Mammary epithelial cell (primary cell): ENCODE measurements at regions of chr16 and their contacts with region 1.

Region 1: DNA sequence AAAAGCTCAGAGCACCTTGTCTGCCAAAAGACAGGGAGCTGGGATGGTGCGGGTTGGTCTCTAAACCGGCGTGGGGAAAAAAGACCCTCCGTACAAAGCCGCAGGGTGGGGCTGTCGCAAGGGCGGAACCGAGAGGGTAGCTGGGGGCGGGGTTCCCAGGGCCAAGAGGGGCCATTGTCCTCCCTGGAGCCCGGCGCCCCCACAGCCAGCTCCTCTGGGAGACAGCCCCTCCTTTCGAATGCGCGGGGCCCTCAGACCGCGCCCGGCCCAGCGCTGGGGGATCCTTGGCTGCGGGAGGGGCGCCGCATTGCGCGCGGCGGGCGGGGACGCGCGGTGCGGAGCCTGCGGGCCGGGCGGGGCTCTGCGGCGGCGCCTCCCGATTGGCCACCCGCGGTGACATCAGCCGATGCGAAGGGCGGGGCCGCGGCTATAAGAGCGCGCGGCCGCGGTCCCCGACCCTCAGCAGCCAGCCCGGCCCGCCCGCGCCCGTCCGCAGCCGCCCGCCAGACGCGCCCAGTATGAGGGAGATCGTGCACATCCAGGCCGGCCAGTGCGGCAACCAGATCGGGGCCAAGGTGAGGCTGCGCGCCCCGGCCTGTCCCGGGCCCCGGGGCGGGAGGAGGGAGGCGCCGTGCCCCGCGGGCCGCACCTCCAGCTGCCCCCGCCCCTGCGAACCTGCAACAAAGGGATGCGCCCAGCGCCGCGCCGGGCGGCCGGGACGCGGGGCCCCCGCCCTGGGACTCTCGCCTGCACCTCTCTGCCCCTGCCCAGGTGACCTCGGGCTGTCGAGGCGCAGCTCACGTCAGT is at the start of gene TUBB3:
- DNase-seq: peak; percentile 72
- H3K4me3 ChIP-seq: peak within 1 kb of the TSS; percentile 59 to 73 (median 69)
- H3K27ac ChIP-seq: peak within 1 kb of the TSS; percentile 67
- H3K4me1 ChIP-seq: peaks cover 57% of the 10 kb centered on the region
- H3K27me3 ChIP-seq: no peaks in the 10 kb centered on the region
- CTCF ChIP-seq: no peak
- total RNA-seq, gene TUBB3: 99.5 to 103 TPM

Region 2: GRCh38 chr16:89325861-89326471 is 597.1 kb before region 1 on chr16:
- CTCF ChIA-PET with region 1: no interaction called
- dilution Hi-C with region 1: no loop called
- in situ Hi-C with region 1: no loop called
- intact Hi-C with region 1: no loop called
- DNase-seq: peak; percentile 56
- H3K4me3 ChIP-seq: no peak overlapping the region
- H3K27ac ChIP-seq: peak overlapping the region; percentile 53
- H3K4me1 ChIP-seq: peaks cover 67% of the 10 kb centered on the region
- H3K27me3 ChIP-seq: no peaks in the 10 kb centered on the region
- CTCF ChIP-seq: no peak

Region 3: DNA sequence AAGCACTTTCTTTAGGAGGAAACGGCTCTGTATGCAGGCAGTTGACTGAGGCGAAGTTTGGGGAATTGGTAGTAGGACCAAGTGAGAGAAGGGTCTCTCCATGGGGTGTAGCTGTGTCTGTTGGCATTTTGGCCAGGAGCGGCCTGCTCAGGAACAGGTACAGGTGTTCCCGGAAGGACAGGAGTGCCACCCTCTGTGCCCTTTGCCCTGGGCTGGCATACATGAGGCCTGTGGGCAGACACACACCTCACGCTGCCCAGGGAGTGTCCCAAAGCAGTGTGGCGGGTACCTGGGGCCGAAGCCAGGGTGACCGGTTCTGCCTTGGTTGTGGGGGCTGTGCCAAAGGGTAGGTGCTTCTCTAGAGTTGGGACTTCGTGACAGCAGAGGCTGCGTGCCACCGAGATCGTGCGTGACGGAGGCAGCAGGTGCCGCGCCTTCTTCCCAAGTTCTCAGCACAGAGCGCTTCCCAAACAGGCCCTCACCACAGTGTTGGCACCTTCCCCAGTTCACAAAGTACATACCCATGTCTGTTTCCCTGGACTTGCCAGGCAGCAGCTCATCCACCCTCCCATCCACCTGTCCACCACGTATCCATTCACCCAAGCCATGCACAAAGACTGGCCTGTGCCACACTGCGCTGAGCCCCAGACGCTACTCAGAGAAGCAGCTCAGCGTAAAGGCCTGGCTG is 69.6 kb before region 1 on chr16:
- CTCF ChIA-PET with region 1: no interaction called
- dilution Hi-C with region 1: loop called (anchors 5 kb)
- in situ Hi-C with region 1: no loop called
- intact Hi-C with region 1: no loop called
- DNase-seq: no peak
- H3K4me3 ChIP-seq: no peak overlapping the region
- H3K27ac ChIP-seq: no peak overlapping the region
- H3K4me1 ChIP-seq: no peaks in the 10 kb centered on the region
- H3K27me3 ChIP-seq: no peaks in the 10 kb centered on the region
- CTCF ChIP-seq: no peak

Region 4: DNA sequence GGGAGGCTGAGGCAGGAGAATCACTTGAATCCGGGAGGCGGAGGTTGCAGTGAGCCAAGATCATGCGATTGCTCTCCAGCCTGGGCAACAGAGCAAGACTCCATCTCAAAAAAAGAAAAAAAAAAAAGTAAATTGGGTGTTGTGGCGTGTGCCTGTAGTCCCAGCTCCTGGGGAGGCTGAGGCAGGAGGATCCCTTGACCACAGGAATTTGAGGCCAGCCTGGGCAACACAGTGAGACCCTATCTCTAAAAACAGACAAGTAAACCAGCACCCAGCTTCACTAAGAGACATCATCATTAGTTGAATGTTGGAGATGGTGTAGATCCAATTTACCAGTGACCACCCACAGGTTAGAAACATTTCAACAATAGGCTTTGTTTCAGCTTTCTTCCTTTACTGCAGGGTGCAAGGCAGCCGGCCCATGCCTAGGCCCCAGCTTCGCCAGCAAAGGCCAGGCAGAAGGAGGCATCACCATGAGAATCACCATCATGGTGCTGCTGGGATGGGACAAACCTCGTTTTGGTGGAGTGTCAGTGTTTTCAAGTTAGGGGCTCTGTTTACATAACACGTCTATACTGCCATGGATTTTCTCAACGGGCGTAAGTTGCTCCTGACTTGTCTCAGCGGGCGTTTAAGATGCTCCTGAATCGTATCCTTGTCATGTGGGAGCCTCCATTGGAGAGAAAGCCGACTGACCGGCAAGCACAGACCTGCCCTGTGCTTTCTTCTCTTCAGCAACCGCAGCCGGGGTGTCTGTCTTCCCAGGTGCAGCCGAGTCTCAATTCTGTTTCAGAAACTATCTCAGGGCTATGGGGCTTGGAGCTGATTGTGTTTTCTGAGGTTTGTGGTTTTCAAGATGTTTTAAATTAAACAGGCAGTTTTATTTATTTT is 42.4 kb before region 1 on chr16:
- CTCF ChIA-PET with region 1: no interaction called
- dilution Hi-C with region 1: no loop called
- in situ Hi-C with region 1: no loop called
- intact Hi-C with region 1: loop called (anchors 2 kb)
- DNase-seq: peak; percentile 93
- H3K4me3 ChIP-seq: no peak overlapping the region
- H3K27ac ChIP-seq: peak overlapping the region; percentile 56
- H3K4me1 ChIP-seq: peaks cover 16% of the 10 kb centered on the region
- H3K27me3 ChIP-seq: no peaks in the 10 kb centered on the region
- CTCF ChIP-seq: no peak

Region 5: DNA sequence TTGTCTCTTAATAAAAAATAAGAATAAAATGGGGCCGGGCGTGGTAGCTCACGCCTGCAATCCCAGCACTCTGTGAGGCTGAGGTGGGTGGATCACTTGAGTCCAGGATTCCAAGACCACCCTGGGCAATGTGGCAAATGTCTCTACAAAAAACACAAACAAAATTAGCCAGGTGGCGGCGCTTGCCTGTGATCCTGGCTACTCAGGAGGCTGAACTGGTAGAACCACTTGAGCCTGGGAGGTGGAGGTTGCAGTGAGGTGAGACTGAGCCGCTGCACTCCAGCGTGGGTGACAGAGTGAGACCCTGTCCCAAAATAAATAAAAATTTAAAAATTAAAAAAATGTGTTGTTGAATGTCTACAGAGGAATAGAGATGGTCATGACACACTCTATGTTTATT is 22.6 kb after region 1 on chr16:
- CTCF ChIA-PET with region 1: no interaction called
- dilution Hi-C with region 1: no loop called
- in situ Hi-C with region 1: no loop called
- intact Hi-C with region 1: loop called (anchors 1 kb)
- DNase-seq: no peak
- H3K4me3 ChIP-seq: no peak overlapping the region
- H3K27ac ChIP-seq: no peak overlapping the region
- H3K4me1 ChIP-seq: peaks cover 13% of the 10 kb centered on the region
- H3K27me3 ChIP-seq: no peaks in the 10 kb centered on the region
- CTCF ChIP-seq: peak in 1 of 2 donors; percentile 1

Region 6: DNA sequence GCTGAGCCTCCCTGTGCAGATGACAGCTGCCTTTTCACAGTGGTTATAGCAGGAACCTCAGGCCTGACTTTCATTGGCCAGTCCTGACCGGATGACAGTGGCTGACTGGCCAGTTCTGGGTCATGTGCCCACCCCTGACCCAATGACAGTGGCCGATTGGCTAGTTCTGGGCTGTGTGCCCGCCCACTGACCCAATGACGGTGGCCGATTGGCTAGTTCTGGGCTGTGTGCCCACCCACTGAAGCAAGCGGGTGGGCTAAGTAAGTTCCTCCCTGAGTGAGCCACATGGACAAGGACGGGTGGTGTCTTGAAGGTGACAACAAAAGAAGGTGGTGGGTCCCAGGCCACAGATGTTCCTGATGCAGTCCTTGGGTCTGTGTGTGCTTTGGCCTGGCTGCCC is 35.0 kb after region 1 on chr16:
- CTCF ChIA-PET with region 1: no interaction called
- dilution Hi-C with region 1: no loop called
- in situ Hi-C with region 1: no loop called
- intact Hi-C with region 1: no loop called
- DNase-seq: no peak
- H3K4me3 ChIP-seq: no peak overlapping the region
- H3K27ac ChIP-seq: no peak overlapping the region
- H3K4me1 ChIP-seq: no peaks in the 10 kb centered on the region
- H3K27me3 ChIP-seq: no peaks in the 10 kb centered on the region
- CTCF ChIP-seq: no peak

Region 7: DNA sequence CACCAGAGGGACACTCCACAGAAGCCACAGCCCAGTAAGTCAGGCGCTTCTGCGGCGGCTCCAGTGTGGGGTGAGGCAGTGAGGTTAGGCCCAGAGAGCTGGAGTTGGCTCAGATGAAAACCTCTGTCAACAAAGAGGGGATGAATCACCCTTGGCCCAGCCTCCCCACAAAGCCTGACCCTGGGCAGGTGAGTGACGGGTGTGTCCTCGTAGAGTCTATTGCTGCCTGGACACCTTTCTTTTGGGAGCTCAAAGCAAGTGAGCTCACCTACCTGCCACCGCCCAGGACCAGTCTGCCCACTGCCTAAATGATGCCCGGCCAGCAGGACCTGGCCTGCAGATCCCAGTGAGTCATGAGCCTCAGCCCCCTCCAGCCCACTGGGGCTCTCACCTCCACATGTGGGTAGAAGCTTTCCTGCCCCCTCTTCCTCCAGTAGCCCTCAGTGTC is 121.0 kb after region 1 on chr16:
- CTCF ChIA-PET with region 1: no interaction called
- dilution Hi-C with region 1: loop called (anchors 5 kb)
- in situ Hi-C with region 1: no loop called
- intact Hi-C with region 1: no loop called
- DNase-seq: peak; percentile 95
- H3K4me3 ChIP-seq: no peak overlapping the region
- H3K27ac ChIP-seq: peak overlapping the region; percentile 45
- H3K4me1 ChIP-seq: peaks cover 29% of the 10 kb centered on the region
- H3K27me3 ChIP-seq: no peaks in the 10 kb centered on the region
- CTCF ChIP-seq: no peak